HepG2 (cell line): ENCODE measurements at regions of chr2 and their contacts with region 1.

Region 1: DNA sequence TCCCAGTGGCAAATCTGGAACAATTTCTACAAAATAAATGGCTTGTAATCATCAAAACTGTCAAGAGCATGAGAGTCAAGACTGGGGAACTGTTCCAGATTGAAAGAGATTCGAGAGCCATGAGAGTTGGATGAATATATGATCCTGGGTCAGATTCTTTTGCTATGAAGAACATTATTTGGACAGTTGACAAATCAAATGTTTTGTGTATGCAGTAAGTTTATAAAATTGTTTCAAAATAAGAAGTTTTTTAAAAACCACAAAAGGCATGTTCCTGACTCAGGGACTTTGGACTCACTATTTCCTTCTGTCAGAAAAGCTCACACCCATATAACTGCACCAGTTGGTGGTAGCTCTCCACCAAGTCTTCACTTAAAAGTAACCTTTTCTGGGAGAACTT is 38.5 kb downstream of the ROCK2 start:
- DNase-seq: no peak
- ATAC-seq: peak; percentile 43
- H3K4me3 ChIP-seq: no peak overlapping the region
- H3K27ac ChIP-seq: no peak overlapping the region
- H3K4me1 ChIP-seq: peaks cover 70% of the 10 kb centered on the region
- H3K27me3 ChIP-seq: no peaks in the 10 kb centered on the region
- CTCF ChIP-seq: no peak
- EP300 ChIP-seq: no peak
- POLR2A ChIP-seq: no peak
- RAD21 ChIP-seq: no peak

Region 2: GRCh38 chr2:11264007-11264406 is 42.0 kb before region 1 on chr2:
- CTCF ChIA-PET with region 1: no interaction called
- POLR2A ChIA-PET with region 1: no interaction called
- in situ Hi-C with region 1: no loop called
- intact Hi-C with region 1: loop called (anchors 5 kb)
- DNase-seq: no peak
- ATAC-seq: no peak
- H3K4me3 ChIP-seq: no peak overlapping the region
- H3K27ac ChIP-seq: no peak overlapping the region
- H3K4me1 ChIP-seq: no peaks in the 10 kb centered on the region
- H3K27me3 ChIP-seq: no peaks in the 10 kb centered on the region
- CTCF ChIP-seq: no peak
- EP300 ChIP-seq: no peak
- POLR2A ChIP-seq: no peak
- RAD21 ChIP-seq: no peak

Region 3: GRCh38 chr2:11292464-11293255 is 13.3 kb before region 1 on chr2:
- CTCF ChIA-PET with region 1: no interaction called
- POLR2A ChIA-PET with region 1: no interaction called
- in situ Hi-C with region 1: no loop called
- intact Hi-C with region 1: no loop called
- DNase-seq: no peak
- ATAC-seq: peak; percentile 54
- H3K4me3 ChIP-seq: no peak overlapping the region
- H3K27ac ChIP-seq: no peak overlapping the region
- H3K4me1 ChIP-seq: peaks cover 34% of the 10 kb centered on the region
- H3K27me3 ChIP-seq: no peaks in the 10 kb centered on the region
- CTCF ChIP-seq: no peak
- EP300 ChIP-seq: no peak
- POLR2A ChIP-seq: no peak
- RAD21 ChIP-seq: no peak